ENCODE measurements at regions of chr6 and their contacts with region 1.

Region 1: GRCh38 chr6:54617730-54618129 is 228.8 kb upstream of the FAM83B start:
- DNase-seq: no peak
- H3K4me3 ChIP-seq: no peak overlapping the region
- H3K4me3 Mint-ChIP-seq: peak overlapping the region; percentile 11
- H3K27ac Mint-ChIP-seq: peak overlapping the region; percentile 76
- H3K4me1 ChIP-seq: peaks cover 20% of the 10 kb centered on the region
- H3K4me1 Mint-ChIP-seq: peaks cover 16% of the 10 kb centered on the region
- H3K27me3 ChIP-seq: no peaks in the 10 kb centered on the region
- H3K27me3 Mint-ChIP-seq: no peaks in the 10 kb centered on the region
- CTCF ChIP-seq: no peak

Region 2: GRCh38 chr6:54515013-54515412 is 102.7 kb before region 1 on chr6:
- CTCF ChIA-PET with region 1: no interaction called
- POLR2A ChIA-PET with region 1: no interaction called
- intact Hi-C with region 1: loop called (anchors 1 kb)
- DNase-seq: peak in 1 of 2 experiments; percentile 7
- H3K4me3 ChIP-seq: no peak overlapping the region
- H3K4me3 Mint-ChIP-seq: no peak overlapping the region
- H3K27ac Mint-ChIP-seq: no peak overlapping the region
- H3K4me1 ChIP-seq: no peaks in the 10 kb centered on the region
- H3K4me1 Mint-ChIP-seq: no peaks in the 10 kb centered on the region
- H3K27me3 ChIP-seq: no peaks in the 10 kb centered on the region
- H3K27me3 Mint-ChIP-seq: no peaks in the 10 kb centered on the region
- CTCF ChIP-seq: no peak